ENCODE measurements at regions of chr11 and their contacts with region 1.

Region 1: GRCh38 chr11:35874751-35875450 is 69.0 kb upstream of the LDLRAD3 start:
- DNase-seq: no peak
- ATAC-seq: no peak

Region 2: DNA sequence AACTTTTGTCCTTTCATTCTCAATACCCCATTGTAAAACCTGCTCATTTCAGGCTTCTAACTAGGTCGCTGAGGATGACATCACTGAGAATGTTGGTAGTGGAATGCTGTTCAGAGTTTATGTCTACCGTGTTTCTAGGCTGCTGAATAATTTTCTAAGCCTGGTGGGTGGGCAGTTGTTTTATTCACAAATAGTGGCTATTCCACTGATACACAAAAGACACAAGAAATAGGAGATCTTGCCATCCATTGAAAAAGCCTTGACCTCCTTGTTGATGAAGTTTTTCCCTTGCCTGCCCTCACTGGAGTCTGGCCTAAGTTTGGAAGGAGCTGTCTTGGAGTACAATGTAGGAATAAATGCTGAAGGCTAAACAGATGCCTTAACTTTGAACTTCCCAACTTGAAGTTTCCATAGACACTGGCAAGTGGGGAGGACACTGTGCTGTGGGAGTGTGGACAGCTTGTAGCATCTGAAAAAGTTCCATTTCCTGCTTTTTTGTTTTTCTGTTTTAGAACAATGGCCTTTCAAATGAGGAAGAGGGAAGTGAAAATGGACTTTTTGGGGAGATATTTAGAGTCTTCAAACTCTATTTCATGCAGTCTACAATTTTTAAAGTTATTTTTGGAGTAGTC is 153.1 kb before region 1 on chr11:
- intact Hi-C with region 1: loop called (anchors 5 kb)
- DNase-seq: no peak
- ATAC-seq: peak; percentile 31

Region 3: DNA sequence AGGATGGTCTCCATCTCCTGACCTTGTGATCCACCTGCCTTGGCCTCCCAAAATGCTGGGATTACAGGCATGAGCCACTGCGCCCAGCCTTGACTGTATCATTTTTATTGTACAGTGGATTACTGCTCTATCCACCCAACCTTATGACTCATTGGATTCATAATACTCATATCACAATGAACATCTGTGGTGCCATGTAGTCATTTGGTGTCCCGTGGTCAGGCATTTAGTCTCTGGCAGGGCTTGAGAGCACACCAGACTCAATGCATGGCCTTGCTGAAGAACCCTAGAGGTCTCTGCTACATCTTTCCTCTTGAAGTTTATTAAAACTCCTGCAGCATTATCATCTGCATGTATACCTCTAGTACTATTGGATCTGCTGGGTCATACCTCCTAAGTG is 29.0 kb before region 1 on chr11:
- intact Hi-C with region 1: no loop called
- DNase-seq: no peak
- ATAC-seq: no peak

Measured in Right ventricle myocardium inferior (tissue), 1 donor.